ENCODE measurements at regions of chr4 and their contacts with region 1.

Region 1: DNA sequence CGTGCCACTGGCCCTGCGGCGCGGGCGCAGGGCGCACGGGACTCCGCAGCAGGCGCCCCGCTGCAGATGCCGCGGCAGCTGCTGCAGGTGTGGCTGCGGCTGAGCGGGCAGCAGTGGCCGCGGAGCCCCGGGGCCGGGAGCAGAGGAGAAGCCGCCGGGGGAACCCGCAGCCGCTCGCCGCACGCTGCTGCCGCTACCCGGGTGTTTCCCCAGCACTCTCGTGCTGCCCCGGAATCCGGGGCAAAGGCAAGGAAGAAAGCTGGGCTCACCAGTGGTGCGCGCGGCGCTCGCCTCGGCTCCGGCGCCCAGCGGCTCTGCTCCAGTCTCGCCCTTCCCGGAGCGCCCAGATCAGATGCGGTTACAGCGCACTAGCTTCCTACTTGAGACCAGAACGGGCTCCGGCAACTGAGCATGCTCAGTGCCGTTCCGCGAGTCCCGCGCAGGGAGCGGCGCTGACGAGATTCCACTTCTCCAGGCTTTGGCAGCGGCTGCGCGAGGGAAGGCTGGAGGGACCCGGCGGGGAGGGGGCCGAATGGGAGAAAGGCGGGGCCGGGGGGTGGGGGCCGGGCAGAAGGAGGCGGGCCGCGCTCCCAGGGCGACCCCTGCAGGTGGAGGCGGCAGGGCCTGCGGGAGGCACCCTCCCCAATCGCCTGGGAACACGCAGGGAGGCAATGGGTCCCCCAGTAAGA is at the start of gene APBB2:
- DNase-seq: peak; percentile 97
- H3K27ac ChIP-seq: peak within 1 kb of the TSS; percentile 93
- CTCF ChIP-seq: peak; percentile 92

Region 2: GRCh38 chr4:40976343-40976742 is 237.9 kb before region 1 on chr4:
- CTCF ChIA-PET with region 1: interaction called, 14 read pairs
- POLR2A ChIA-PET with region 1: no interaction called
- DNase-seq: peak; percentile 54
- H3K27ac ChIP-seq: peak overlapping the region; percentile 64
- CTCF ChIP-seq: peak; percentile 75

Region 3: DNA sequence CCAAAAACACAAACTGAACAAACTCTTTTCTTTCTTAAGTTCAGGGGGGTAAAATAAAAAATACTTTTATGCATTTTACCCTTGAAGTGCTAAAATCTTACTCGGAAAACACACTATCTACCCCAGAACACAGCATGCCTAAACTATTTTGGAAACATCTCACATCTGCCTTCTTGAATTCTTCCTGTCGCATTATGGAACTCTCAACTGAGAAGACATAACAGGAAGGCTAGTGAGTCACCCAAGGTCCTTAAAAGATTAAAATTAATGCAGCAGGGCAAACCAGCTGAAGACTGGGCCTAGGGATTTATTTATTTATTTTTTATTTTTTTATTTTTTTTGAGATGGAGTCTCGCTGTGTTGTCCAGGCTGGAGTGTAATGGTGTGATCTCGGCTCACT is 208.1 kb before region 1 on chr4:
- CTCF ChIA-PET with region 1: no interaction called
- POLR2A ChIA-PET with region 1: no interaction called
- DNase-seq: no peak
- H3K27ac ChIP-seq: no peak overlapping the region
- CTCF ChIP-seq: no peak

Region 4: DNA sequence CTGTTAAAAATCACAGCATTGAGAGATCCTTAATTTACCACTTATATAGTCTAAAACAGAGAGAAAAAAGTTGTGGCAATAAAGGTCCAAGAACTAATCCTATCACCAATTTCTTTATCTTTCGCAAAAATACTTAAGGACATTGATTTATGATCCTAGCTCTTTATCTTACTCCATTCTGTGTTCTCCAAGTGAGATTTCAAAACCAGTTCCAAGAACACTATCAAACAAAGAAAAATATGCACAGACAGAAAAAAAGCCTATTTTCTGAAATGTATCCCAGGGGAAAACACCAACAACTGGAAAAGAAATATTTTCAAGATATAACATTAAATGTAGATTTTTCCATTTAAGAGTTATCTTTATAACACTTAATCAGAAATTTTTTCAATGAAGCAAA is 172.7 kb before region 1 on chr4:
- CTCF ChIA-PET with region 1: interaction called, 11 read pairs
- POLR2A ChIA-PET with region 1: no interaction called
- DNase-seq: no peak
- H3K27ac ChIP-seq: no peak overlapping the region
- CTCF ChIP-seq: no peak

Region 5: GRCh38 chr4:41102414-41103092 is 111.7 kb before region 1 on chr4:
- CTCF ChIA-PET with region 1: no interaction called
- POLR2A ChIA-PET with region 1: no interaction called
- DNase-seq: no peak
- H3K27ac ChIP-seq: no peak overlapping the region
- CTCF ChIP-seq: no peak